ENCODE measurements at regions of chrX and their contacts with region 1.

Region 1: DNA sequence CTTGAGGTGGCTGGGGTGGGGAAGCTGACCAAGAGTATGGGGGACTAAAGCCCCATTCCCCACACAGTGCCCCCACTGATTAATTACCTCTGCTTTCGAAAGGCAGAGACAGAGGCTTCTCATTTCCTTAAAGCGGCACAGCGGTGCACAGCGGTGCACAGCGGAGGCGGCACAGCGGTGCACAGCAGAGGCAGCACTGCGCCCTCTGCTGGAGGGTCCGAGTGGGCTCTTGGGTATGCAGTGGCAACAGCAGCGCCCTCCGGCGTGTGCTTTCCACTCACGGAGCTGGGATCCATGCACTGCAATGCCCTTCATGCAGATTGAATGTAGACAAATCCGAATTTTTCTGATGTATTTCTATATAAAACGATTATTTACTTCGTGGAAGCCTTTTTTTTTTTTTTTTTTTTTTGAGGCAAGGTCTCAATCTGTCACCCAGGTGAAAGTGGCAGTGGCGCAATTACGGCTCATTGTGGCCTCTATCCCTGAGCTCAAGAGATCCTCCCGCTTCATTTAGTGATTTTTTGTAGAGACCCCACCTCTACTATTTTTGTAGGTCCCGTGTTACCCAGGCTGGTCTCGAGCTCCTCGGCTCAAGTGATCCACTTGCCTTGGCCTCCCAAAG is 19.7 kb upstream of the PRPS2 start:
- DNase-seq: peak; percentile 25
- H3K4me3 ChIP-seq: no peak overlapping the region
- H3K27ac ChIP-seq: no peak overlapping the region
- H3K4me1 ChIP-seq: peaks cover 0 to 6% of the 10 kb centered on the region in 2 experiments; a peak in 1 of 4 replicates
- H3K27me3 ChIP-seq: peaks cover 35% of the 10 kb centered on the region; the same call in 1 of the 2 replicates
- CTCF ChIP-seq: peak; percentile 45
- EP300 ChIP-seq: no peak
- RAD21 ChIP-seq: no peak

Region 2: GRCh38 chrX:12751887-12752286 is 19.7 kb before region 1 on chrX:
- CTCF ChIA-PET with region 1: interaction called, 13 read pairs
- POLR2A ChIA-PET with region 1: no interaction called
- DNase-seq: no peak
- H3K4me3 ChIP-seq: no peak overlapping the region
- H3K27ac ChIP-seq: no peak overlapping the region
- H3K4me1 ChIP-seq: no peaks in the 10 kb centered on the region
- H3K27me3 ChIP-seq: no peaks in the 10 kb centered on the region; the same call in 1 of the 2 replicates
- CTCF ChIP-seq: no peak
- EP300 ChIP-seq: no peak
- RAD21 ChIP-seq: no peak

Region 3: DNA sequence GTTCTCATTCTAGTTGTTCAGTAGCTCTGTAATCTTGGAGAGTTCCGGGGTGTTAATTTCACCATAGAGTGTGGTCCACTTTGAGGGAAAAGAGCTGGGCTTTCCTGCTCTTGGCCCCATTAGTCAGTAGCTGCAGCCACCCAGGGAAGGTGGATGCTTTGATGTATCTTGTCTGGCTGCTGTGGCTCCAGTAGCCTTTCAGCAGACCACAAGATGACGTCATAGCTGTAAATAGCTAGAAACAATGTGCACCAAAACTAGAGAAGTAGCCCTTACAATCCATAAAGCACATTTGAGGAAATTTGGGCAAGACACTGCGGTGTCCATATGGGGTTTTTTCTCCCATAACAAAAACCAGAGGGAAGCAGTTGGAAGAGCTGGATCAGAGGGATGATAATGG is 13.3 kb before region 1 on chrX:
- CTCF ChIA-PET with region 1: interaction called, 22 read pairs
- POLR2A ChIA-PET with region 1: no interaction called
- DNase-seq: no peak
- H3K4me3 ChIP-seq: no peak overlapping the region
- H3K27ac ChIP-seq: no peak overlapping the region
- H3K4me1 ChIP-seq: no peaks in the 10 kb centered on the region
- H3K27me3 ChIP-seq: no peaks in the 10 kb centered on the region; the same call in 1 of the 2 replicates
- CTCF ChIP-seq: no peak
- EP300 ChIP-seq: no peak
- RAD21 ChIP-seq: no peak

Region 4: GRCh38 chrX:13223868-13224555 is 452.5 kb after region 1 on chrX:
- CTCF ChIA-PET with region 1: no interaction called
- POLR2A ChIA-PET with region 1: no interaction called
- DNase-seq: no peak
- H3K4me3 ChIP-seq: no peak overlapping the region
- H3K27ac ChIP-seq: peak overlapping the region; percentile 74 to 93; a peak in 3 of 4 replicates
- H3K4me1 ChIP-seq: peaks cover 7 to 33% of the 10 kb centered on the region in 2 experiments
- H3K27me3 ChIP-seq: no peaks in the 10 kb centered on the region
- CTCF ChIP-seq: peak; percentile 43
- EP300 ChIP-seq: peak; percentile 32 to 87; a peak in 2 of 4 replicates
- RAD21 ChIP-seq: peak; percentile 12; the same call in 1 of the 2 replicates